ENCODE measurements at regions of chr21 and their contacts with region 1.

Region 1: GRCh38 chr21:33557447-33557846 is 14.6 kb downstream of the SON start:
- DNase-seq: no peak
- H3K4me3 ChIP-seq: no peak overlapping the region
- H3K27ac ChIP-seq: no peak overlapping the region
- H3K4me1 ChIP-seq: no peaks in the 10 kb centered on the region
- H3K27me3 ChIP-seq: no peaks in the 10 kb centered on the region
- CTCF ChIP-seq: no peak

Region 2: GRCh38 chr21:33542640-33543504 is 14.6 kb before region 1 on chr21 and contains the start of gene SON:
- CTCF ChIA-PET with region 1: no interaction called
- POLR2A ChIA-PET with region 1: no interaction called
- intact Hi-C with region 1: no loop called
- DNase-seq: peak; percentile 93 to 95
- H3K4me3 ChIP-seq: peak within 1 kb of the TSS; percentile 92
- H3K27ac ChIP-seq: peak within 1 kb of the TSS; percentile 98
- H3K4me1 ChIP-seq: peaks cover 31% of the 10 kb centered on the region
- H3K27me3 ChIP-seq: no peaks in the 10 kb centered on the region
- CTCF ChIP-seq: no peak
- total RNA-seq, gene SON: 131 and 158 TPM in 2 replicates

Region 3: DNA sequence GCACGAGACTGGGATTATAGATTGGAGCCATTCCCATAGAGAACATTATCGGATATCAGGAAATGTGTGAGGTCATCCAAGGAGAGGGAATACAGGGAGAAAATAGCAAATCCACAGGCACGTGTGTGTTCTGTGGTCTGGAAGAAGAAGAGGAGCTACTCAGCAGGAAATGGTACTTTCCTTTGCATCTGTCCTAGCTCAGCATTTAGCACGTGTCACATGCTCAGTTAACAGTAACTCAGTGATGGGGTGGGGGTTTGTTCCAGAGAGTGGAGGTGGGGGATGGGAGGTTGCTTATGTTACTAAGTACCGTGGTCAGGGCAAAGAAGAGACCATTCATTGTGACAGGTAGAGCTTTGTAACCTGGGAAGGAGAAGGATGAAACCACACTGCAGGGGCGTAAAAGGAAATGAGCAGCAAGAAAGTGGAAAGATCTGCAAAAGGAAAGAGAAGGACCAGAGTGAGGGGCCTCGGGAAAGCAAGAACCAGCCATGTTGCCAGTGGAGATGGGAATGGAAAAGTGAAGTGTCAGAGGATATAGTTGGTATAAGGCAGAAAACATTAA is 257.8 kb after region 1 on chr21:
- CTCF ChIA-PET with region 1: no interaction called
- POLR2A ChIA-PET with region 1: interaction called, 10 read pairs
- intact Hi-C with region 1: no loop called
- DNase-seq: no peak
- H3K4me3 ChIP-seq: no peak overlapping the region
- H3K27ac ChIP-seq: no peak overlapping the region
- H3K4me1 ChIP-seq: no peaks in the 10 kb centered on the region
- H3K27me3 ChIP-seq: no peaks in the 10 kb centered on the region
- CTCF ChIP-seq: no peak